Activated T-helper 1 cell treated with anti-CD3 and anti-CD28 coated beads, Interleukin-12 subunit alpha, Interleukin-12 subunit beta, Interleukin-2, Interleukin-4 antibody, amounts not matched to agents 30 ng/mL and 10 ng/mL and 1 ng/mL, durations not matched to agents 14 hours and 24 hours and 36 hours (primary cell): ENCODE measurements at regions of chr2 and their contacts with region 1.

Region 1: DNA sequence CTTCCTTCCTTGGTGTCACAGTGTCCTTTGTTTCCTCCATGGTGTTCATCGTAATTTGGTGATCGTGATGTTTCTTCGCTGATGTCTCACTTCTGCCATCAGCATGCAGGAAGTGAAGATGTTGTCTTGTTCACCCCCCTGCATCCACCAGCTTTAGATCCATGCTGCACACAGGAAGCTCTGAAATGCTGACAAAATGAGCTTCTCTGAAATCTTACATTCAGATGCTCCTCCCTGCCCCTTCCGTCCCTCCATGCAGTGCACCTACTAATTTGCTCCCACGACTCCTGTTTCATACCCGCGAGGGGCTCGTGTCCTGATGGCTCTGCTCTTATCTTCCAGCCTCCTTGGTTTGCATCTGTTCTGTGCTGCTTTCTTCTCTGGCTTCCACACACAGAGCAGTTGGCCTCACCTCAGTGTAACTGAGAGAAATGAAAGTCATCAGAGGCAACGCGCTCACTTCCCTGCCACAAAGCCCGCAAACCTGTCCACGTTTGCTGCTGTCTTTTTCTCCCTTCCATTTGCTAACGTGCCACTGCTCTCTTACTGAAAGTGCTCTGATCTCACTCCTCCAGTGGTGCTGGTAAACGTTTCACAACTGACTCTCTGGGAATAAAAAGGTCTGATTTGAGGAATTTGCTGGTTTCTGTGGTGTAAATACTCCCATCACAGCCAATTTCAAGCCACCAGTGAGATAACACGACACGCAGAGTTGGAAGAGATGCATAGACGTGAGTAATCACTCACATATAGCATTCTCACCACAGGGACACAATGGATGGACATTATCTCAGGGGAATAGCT is 41.0 kb upstream of the MGAT4A start:
- DNase-seq: peak; percentile 63
- H3K4me3 Mint-ChIP-seq: peak overlapping the region; percentile 92
- H3K27ac Mint-ChIP-seq: peak overlapping the region; percentile 99
- H3K4me1 Mint-ChIP-seq: peaks cover 64% of the 10 kb centered on the region
- H3K27me3 Mint-ChIP-seq: peaks cover 2% of the 10 kb centered on the region

Region 2: GRCh38 chr2:97906307-97906706 is 865.6 kb before region 1 on chr2:
- intact Hi-C with region 1: no loop called
- DNase-seq: no peak
- H3K4me3 Mint-ChIP-seq: no peak overlapping the region
- H3K27ac Mint-ChIP-seq: no peak overlapping the region
- H3K4me1 Mint-ChIP-seq: peaks cover 22% of the 10 kb centered on the region
- H3K27me3 Mint-ChIP-seq: no peaks in the 10 kb centered on the region

Region 3: DNA sequence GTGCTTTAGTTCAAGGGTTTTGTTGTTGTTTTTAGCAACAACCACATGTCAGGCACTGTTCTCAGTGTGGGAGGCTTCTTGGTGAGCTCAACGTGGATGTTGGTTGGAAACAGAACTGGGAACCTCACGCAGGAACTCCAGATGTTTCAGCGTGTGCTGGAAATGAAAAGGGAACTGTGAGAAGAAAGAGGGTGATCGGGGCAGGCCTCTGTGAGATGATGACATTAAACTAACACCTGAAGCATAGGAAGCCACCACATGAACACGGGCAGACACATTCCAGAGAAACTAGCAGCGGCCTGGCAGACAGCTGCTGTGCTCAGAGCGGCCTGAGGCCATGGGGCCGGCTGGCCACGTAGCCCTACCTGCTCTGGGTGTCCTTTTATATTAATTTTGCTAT is 230.0 kb before region 1 on chr2:
- intact Hi-C with region 1: no loop called
- DNase-seq: no peak
- H3K4me3 Mint-ChIP-seq: peak overlapping the region; percentile 19
- H3K27ac Mint-ChIP-seq: peak overlapping the region; percentile 76
- H3K4me1 Mint-ChIP-seq: peaks cover 27% of the 10 kb centered on the region
- H3K27me3 Mint-ChIP-seq: no peaks in the 10 kb centered on the region

Region 4: DNA sequence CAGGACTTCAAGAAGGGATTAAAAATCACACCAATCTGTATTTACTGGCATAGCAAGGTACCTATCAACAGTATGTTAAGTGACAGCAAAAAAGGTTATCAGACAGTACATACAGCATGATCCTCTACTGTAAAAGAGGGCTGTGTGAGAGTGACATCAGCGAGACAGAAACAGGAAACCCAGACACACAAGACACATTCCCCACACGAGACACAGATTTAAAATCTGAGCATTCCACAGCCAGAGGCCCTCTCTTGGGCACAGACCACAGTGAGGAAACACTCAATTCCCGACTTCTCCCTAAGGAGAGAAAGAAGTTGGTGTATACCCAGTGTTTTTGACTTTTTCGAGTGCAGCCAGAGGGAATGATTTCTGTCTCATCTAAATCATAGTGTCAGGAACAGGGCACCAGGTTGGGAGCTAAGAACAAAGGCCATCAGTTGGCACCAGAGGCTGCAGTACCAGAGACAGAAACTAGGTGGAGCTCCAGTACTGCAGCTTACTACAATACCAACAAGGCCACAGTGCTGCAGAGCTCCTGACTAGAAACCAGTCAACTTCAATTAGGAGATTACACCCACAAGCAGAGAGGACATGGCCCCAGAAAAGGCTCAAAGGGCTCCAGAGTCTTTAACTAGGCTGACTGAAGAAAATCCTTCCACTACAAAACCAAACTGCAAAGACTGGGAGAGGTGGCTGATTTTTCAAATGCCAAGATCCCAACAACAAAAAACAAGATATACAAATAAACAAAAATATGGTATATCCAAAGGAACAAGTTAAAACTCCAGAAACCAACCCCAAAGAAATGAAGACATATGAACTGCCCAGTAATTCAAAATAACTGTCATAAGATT is 122.6 kb before region 1 on chr2:
- intact Hi-C with region 1: loop called (anchors 1 kb)
- DNase-seq: peak; percentile 70
- H3K4me3 Mint-ChIP-seq: no peak overlapping the region
- H3K27ac Mint-ChIP-seq: peak overlapping the region; percentile 2
- H3K4me1 Mint-ChIP-seq: peaks cover 51% of the 10 kb centered on the region
- H3K27me3 Mint-ChIP-seq: no peaks in the 10 kb centered on the region

Region 5: GRCh38 chr2:98691303-98691702 is 80.6 kb before region 1 on chr2:
- intact Hi-C with region 1: loop called (anchors 1 kb)
- DNase-seq: no peak
- H3K4me3 Mint-ChIP-seq: no peak overlapping the region
- H3K27ac Mint-ChIP-seq: peak overlapping the region; percentile 71
- H3K4me1 Mint-ChIP-seq: peaks cover 75% of the 10 kb centered on the region
- H3K27me3 Mint-ChIP-seq: no peaks in the 10 kb centered on the region

Region 6: GRCh38 chr2:98761267-98761781 is 10.6 kb before region 1 on chr2:
- intact Hi-C with region 1: loop called (anchors 1 kb)
- DNase-seq: peak; percentile 46
- H3K4me3 Mint-ChIP-seq: peak overlapping the region; percentile 62
- H3K27ac Mint-ChIP-seq: peak overlapping the region; percentile 90
- H3K4me1 Mint-ChIP-seq: peaks cover 81% of the 10 kb centered on the region
- H3K27me3 Mint-ChIP-seq: no peaks in the 10 kb centered on the region

Region 7: GRCh38 chr2:98839292-98839691 is 67.4 kb after region 1 on chr2:
- intact Hi-C with region 1: no loop called
- DNase-seq: no peak
- H3K4me3 Mint-ChIP-seq: no peak overlapping the region
- H3K27ac Mint-ChIP-seq: no peak overlapping the region
- H3K4me1 Mint-ChIP-seq: peaks cover 28% of the 10 kb centered on the region
- H3K27me3 Mint-ChIP-seq: peaks cover 32% of the 10 kb centered on the region

Region 8: GRCh38 chr2:99154643-99155536 is 383.0 kb after region 1 on chr2 and contains the starts of genes LIPT1 and TSGA10:
- intact Hi-C with region 1: loop called (anchors 10 kb)
- DNase-seq: peak; percentile 92
- H3K4me3 Mint-ChIP-seq: no peak within 1 kb of the TSS
- H3K27ac Mint-ChIP-seq: peak within 1 kb of the TSS; percentile 95
- H3K4me1 Mint-ChIP-seq: peaks cover 31% of the 10 kb centered on the region
- H3K27me3 Mint-ChIP-seq: no peaks in the 10 kb centered on the region
- total RNA-seq, gene LIPT1: 2.2 and 3.3 TPM in 2 replicates
- total RNA-seq, gene TSGA10: 3.0 and 4.1 TPM in 2 replicates